ENCODE measurements at regions of chr3 and their contacts with region 1.

Region 1: DNA sequence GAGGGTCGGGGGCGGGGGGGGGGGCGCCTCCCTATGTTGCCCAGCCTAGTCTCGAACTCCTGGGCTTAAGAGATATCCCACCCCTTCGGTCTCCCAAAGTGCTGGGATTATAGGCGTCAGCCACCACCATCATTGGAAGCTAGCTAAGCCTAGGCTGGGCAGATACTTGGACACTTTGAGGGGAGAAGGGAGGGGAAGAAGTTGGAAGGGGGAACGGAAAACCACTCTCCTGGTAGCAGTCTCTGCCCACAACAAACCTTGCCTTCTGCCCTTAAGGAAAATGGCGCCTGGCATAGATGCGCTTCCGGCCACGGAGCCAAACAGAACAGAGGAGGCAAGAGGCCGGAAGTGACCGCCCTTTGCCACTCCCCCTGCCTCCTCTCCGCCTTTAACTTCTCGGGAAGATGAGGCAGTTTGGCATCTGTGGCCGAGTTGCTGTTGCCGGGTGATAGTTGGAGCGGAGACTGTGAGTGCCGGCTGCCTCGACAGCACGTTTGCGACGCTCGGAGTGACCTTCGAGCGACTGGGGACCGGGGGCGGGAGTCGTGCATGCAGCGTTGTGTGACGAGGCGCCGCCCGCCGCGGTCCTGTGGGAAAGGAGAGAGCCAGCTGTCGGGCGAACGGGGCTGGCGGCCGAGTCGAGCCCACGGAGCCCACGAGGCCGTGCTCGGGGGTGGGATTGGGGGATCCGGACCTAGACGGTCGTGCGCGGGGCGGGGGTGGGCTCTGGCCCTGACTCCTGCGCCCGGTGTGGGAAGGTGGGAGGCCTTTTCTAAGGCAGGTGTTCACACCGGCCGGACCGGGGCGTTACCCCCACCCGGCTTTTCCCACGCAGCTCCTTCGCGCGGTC is at the start of gene MFN1:
- DNase-seq: peak; percentile 69 to 91 (median 88)
- ATAC-seq: peak; percentile 99
- H3K4me3 ChIP-seq: peak within 1 kb of the TSS; percentile 99
- H3K4me3 Mint-ChIP-seq: peak within 1 kb of the TSS; percentile 97 to 100 (median 98)
- H3K27ac ChIP-seq: peak within 1 kb of the TSS; percentile 81
- H3K27ac Mint-ChIP-seq: peak within 1 kb of the TSS; percentile 84 to 98 (median 94)
- H3K4me1 ChIP-seq: peaks cover 8 to 13% of the 10 kb centered on the region in 2 donors
- H3K4me1 Mint-ChIP-seq: peaks cover 7 to 39% (median 28%) of the 10 kb centered on the region in 7 donors
- H3K27me3 ChIP-seq: no peaks in the 10 kb centered on the region
- H3K27me3 Mint-ChIP-seq: no peaks in the 10 kb centered on the region
- total RNA-seq, gene MFN1: 32.2 to 58.1 (median 40.3) TPM

Region 2: GRCh38 chr3:179071550-179072397 is 275.8 kb before region 1 on chr3 and contains the start of gene ZMAT3:
- CTCF ChIA-PET with region 1: no interaction called
- POLR2A ChIA-PET with region 1: interaction called, 4 read pairs
- intact Hi-C with region 1: loop called (anchors 1 kb)
- DNase-seq: peak; percentile 72 to 88 (median 83)
- ATAC-seq: peak; percentile 88
- H3K4me3 ChIP-seq: peak within 1 kb of the TSS; percentile 74
- H3K4me3 Mint-ChIP-seq: peak within 1 kb of the TSS; percentile 97 to 100 (median 98)
- H3K27ac ChIP-seq: peak within 1 kb of the TSS; percentile 87
- H3K27ac Mint-ChIP-seq: peak within 1 kb of the TSS; percentile 89 to 98 (median 95)
- H3K4me1 ChIP-seq: peaks cover 13 to 18% of the 10 kb centered on the region in 2 donors
- H3K4me1 Mint-ChIP-seq: peaks cover 24 to 81% (median 59%) of the 10 kb centered on the region in 7 donors
- H3K27me3 ChIP-seq: no peaks in the 10 kb centered on the region
- H3K27me3 Mint-ChIP-seq: no peaks in the 10 kb centered on the region
- total RNA-seq, gene ZMAT3: 20.6 to 23.7 (median 21.7) TPM

Region 3: GRCh38 chr3:179260949-179261765 is 86.4 kb before region 1 on chr3:
- CTCF ChIA-PET with region 1: interaction called, 3 read pairs
- POLR2A ChIA-PET with region 1: no interaction called
- intact Hi-C with region 1: loop called in 1 of 2 experiments (anchors 1 kb)
- DNase-seq: peak; percentile 34 to 73 (median 60)
- ATAC-seq: peak; percentile 96
- H3K4me3 ChIP-seq: peak overlapping the region; percentile 66
- H3K4me3 Mint-ChIP-seq: peak overlapping the region; percentile 60 to 89 (median 83)
- H3K27ac ChIP-seq: peak overlapping the region; percentile 58
- H3K27ac Mint-ChIP-seq: peak overlapping the region; percentile 11 to 78 (median 59)
- H3K4me1 ChIP-seq: peaks cover 0 to 6% of the 10 kb centered on the region in 2 donors
- H3K4me1 Mint-ChIP-seq: peaks cover 4 to 29% (median 21%) of the 10 kb centered on the region in 7 donors
- H3K27me3 ChIP-seq: no peaks in the 10 kb centered on the region
- H3K27me3 Mint-ChIP-seq: peaks cover 0 to 20% (median 0%) of the 10 kb centered on the region in 5 donors

Region 4: GRCh38 chr3:179604321-179605078 is 256.9 kb after region 1 on chr3 and contains the starts of genes MRPL47 and NDUFB5:
- CTCF ChIA-PET with region 1: no interaction called
- POLR2A ChIA-PET with region 1: interaction called, 4 read pairs
- intact Hi-C with region 1: loop called (anchors 1 kb)
- DNase-seq: peak; percentile 76 to 95 (median 92)
- ATAC-seq: peak; percentile 100
- H3K4me3 ChIP-seq: peak within 1 kb of the TSS; percentile 95
- H3K4me3 Mint-ChIP-seq: peak within 1 kb of the TSS; percentile 95 to 99 (median 99)
- H3K27ac ChIP-seq: peak within 1 kb of the TSS; percentile 90
- H3K27ac Mint-ChIP-seq: peak within 1 kb of the TSS; percentile 98 to 100 (median 99)
- H3K4me1 ChIP-seq: peaks cover 15 to 25% of the 10 kb centered on the region in 2 donors
- H3K4me1 Mint-ChIP-seq: peaks cover 23 to 65% (median 46%) of the 10 kb centered on the region in 7 donors
- H3K27me3 ChIP-seq: no peaks in the 10 kb centered on the region
- H3K27me3 Mint-ChIP-seq: no peaks in the 10 kb centered on the region
- total RNA-seq, gene MRPL47: 14.4 to 41.4 (median 18.5) TPM
- total RNA-seq, gene NDUFB5: 33.4 to 80.2 (median 62.8) TPM

Region 5: DNA sequence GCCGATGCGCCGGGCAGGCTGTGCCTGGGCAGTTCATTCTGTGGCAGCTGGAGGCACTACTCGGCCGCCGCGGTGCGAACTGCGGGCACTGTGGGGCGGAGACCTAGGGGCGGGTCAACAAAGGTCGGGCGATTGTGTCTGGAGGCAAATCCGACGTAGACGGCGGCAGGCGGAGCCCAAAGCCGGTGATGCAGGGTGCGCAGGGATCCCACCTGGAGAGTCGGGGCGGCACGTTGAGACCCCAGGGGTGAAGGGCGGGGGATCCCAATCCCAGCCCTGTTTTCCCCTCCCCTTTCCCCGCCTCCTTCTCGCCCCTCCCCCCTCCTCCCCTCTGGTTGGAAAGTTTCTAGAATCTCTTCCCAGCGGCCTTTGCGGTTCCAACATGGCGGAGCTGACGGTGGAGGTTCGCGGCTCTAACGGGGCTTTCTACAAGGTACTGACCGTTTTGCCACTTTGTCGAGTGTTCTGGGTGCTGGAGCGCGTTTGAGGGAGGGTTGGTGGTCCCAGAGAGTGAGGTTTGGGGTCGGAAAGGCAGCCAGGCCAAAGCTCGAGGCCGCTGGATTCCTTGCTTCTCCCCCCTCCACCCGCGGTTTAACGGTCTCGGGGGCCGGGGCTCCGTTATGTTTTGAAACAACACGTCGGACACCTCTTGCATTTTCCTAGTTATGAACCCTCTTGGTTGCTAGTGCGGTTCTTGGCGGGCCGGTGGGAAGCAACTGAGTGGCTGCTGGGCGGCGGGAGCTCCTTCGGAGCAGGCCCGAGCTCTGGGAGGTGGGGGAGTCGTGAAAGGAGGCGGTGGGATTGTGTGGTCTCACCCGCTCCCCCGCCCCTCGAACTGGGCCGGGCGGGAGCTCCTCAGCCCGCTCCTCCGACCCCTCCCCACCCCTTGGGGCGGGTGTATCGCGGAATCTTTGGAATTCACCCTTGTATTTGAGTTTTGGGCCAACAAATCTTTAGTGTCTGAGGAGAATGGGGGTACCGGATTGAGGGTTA is 1565.0 kb after region 1 on chr3 and contains the start of gene FXR1:
- CTCF ChIA-PET with region 1: no interaction called
- POLR2A ChIA-PET with region 1: no interaction called
- intact Hi-C with region 1: loop called in 1 of 2 experiments (anchors 1 kb)
- DNase-seq: peak; percentile 80 to 91 (median 89)
- ATAC-seq: peak; percentile 95
- H3K4me3 ChIP-seq: peak within 1 kb of the TSS; percentile 80
- H3K4me3 Mint-ChIP-seq: peak within 1 kb of the TSS; percentile 91 to 98 (median 96)
- H3K27ac ChIP-seq: peak within 1 kb of the TSS; percentile 97
- H3K27ac Mint-ChIP-seq: peak within 1 kb of the TSS; percentile 94 to 100 (median 97)
- H3K4me1 ChIP-seq: peaks cover 17 to 25% of the 10 kb centered on the region in 2 donors
- H3K4me1 Mint-ChIP-seq: peaks cover 35 to 76% (median 67%) of the 10 kb centered on the region in 7 donors
- H3K27me3 ChIP-seq: no peaks in the 10 kb centered on the region
- H3K27me3 Mint-ChIP-seq: no peaks in the 10 kb centered on the region
- total RNA-seq, gene FXR1: 108 to 151 (median 129) TPM

Measured in naive thymus-derived CD4-positive, alpha-beta T cell (primary cell).